Naive thymus-derived CD4-positive, alpha-beta T cell (primary cell): ENCODE measurements at regions of chr9 and their contacts with region 1.

Region 1: GRCh38 chr9:137240861-137241489 is at the start of gene TUBB4B:
- DNase-seq: peak; percentile 87 to 99 (median 98)
- ATAC-seq: peak; percentile 87
- H3K4me3 ChIP-seq: peak within 1 kb of the TSS; percentile 72
- H3K4me3 Mint-ChIP-seq: peak within 1 kb of the TSS; percentile 83 to 97 (median 92)
- H3K27ac ChIP-seq: peak within 1 kb of the TSS; percentile 83
- H3K27ac Mint-ChIP-seq: peak within 1 kb of the TSS; percentile 82 to 94 (median 93)
- H3K4me1 ChIP-seq: peaks cover 15 to 23% of the 10 kb centered on the region in 2 donors
- H3K4me1 Mint-ChIP-seq: peaks cover 12 to 35% (median 21%) of the 10 kb centered on the region in 7 donors
- H3K27me3 ChIP-seq: no peaks in the 10 kb centered on the region
- H3K27me3 Mint-ChIP-seq: peaks cover 0 to 4% (median 0%) of the 10 kb centered on the region in 5 donors
- total RNA-seq, gene TUBB4B: 44.2 to 260 (median 87.5) TPM

Region 2: DNA sequence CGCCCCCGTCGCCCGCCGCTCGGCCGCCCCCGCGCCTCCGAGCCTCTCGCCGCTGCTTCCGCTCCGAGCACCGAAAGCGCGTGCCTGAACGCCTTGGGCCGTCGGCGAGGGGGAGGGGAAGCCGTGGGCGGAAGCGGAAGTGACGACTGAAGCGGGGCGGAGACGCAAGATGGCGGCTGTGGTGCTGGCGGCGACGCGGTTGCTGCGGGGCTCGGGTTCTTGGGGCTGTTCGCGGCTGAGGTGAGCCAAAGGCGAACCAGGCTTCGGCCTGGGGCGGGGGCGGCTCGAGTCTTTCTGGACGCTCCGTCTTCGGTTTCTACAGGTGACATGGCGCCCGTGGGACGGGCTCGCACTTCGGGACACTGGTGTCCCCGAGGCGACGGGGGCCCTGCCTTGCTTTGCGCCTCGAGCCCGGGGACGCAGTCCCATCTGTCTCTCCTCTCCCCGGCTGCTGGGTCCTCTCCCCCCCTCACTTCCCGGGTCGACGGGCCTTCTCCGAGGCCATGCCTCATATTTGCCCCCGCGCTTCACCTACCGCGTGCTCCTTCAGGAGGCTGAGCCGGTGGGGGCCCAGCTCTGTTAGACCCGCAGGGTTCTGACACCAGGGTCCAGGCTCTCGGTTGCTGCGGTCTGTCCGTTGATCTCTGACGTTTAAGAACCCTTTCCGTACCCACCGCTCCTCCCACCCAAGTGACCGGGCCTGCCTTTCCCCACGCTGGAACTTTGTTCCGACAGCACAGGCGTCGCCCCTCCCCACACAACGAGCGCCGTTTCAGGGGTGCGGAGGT is 830.3 kb before region 1 on chr9 and contains the starts of genes ENTR1 and PMPCA:
- CTCF ChIA-PET with region 1: no interaction called
- POLR2A ChIA-PET with region 1: no interaction called
- intact Hi-C with region 1: loop called in 1 of 2 experiments (anchors 5 kb)
- DNase-seq: peak; percentile 90 to 99 (median 93)
- ATAC-seq: peak; percentile 94
- H3K4me3 ChIP-seq: peak within 1 kb of the TSS; percentile 96
- H3K4me3 Mint-ChIP-seq: peak within 1 kb of the TSS; percentile 83 to 93 (median 90)
- H3K27ac ChIP-seq: peak within 1 kb of the TSS; percentile 97
- H3K27ac Mint-ChIP-seq: peak within 1 kb of the TSS; percentile 78 to 95 (median 90)
- H3K4me1 ChIP-seq: peaks cover 18 to 26% of the 10 kb centered on the region in 2 donors
- H3K4me1 Mint-ChIP-seq: peaks cover 34 to 56% (median 45%) of the 10 kb centered on the region in 7 donors
- H3K27me3 ChIP-seq: no peaks in the 10 kb centered on the region
- H3K27me3 Mint-ChIP-seq: no peaks in the 10 kb centered on the region
- total RNA-seq, gene ENTR1: 56.3 to 89.0 (median 66.6) TPM
- total RNA-seq, gene PMPCA: 60.5 to 86.3 (median 71.6) TPM

Region 3: DNA sequence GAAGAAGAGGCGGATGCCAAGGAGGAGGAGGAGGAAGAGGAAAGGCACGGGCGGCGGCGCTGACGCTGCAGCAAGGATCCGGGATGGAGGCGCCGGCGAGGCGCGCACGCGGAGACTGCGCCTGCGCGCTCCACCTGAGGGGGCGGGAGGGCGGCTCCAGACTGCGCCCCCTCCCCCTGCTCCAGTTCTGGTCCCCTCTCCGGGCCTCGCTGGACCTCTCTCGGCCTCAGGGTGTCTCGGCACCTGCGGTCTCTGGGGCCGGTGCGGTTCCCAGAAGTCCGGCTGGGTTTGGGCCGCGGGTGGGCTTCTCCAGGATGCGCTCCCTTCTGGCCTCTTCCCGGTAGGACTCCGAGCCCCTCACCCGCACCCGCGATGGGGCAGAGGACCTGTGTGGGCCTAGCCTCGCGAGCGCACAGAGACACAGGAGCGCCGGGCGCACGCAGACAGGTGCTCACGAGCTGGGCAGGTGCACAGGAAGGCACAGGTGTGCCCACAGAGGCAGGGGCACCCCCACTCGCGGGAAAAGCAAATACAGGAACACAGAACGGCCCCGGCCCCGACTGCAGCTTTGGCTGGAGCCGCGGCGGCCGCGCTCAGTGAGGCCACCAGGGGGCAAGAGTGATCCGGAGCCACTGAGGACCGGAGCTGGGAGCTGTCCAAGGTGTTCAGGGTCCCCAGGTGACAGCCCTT is 194.7 kb before region 1 on chr9 and contains the start of gene NPDC1:
- CTCF ChIA-PET with region 1: interaction called, 3 read pairs
- POLR2A ChIA-PET with region 1: no interaction called
- intact Hi-C with region 1: loop called in 1 of 2 experiments (anchors 5 kb)
- DNase-seq: peak; percentile 55 to 86 (median 66)
- ATAC-seq: peak; percentile 92
- H3K4me3 ChIP-seq: peak within 1 kb of the TSS; percentile 46
- H3K4me3 Mint-ChIP-seq: peak within 1 kb of the TSS; percentile 29 to 79 (median 59)
- H3K27ac ChIP-seq: no peak within 1 kb of the TSS
- H3K27ac Mint-ChIP-seq: no peak within 1 kb of the TSS
- H3K4me1 ChIP-seq: peaks cover 9 to 25% of the 10 kb centered on the region in 2 donors
- H3K4me1 Mint-ChIP-seq: peaks cover 0 to 11% (median 9%) of the 10 kb centered on the region in 7 donors
- H3K27me3 ChIP-seq: peaks cover 9 to 35% of the 10 kb centered on the region in 2 donors
- H3K27me3 Mint-ChIP-seq: peaks cover 15 to 46% (median 34%) of the 10 kb centered on the region in 5 donors
- total RNA-seq, gene NPDC1: 2.3 to 37.5 (median 7.4) TPM

Region 4: DNA sequence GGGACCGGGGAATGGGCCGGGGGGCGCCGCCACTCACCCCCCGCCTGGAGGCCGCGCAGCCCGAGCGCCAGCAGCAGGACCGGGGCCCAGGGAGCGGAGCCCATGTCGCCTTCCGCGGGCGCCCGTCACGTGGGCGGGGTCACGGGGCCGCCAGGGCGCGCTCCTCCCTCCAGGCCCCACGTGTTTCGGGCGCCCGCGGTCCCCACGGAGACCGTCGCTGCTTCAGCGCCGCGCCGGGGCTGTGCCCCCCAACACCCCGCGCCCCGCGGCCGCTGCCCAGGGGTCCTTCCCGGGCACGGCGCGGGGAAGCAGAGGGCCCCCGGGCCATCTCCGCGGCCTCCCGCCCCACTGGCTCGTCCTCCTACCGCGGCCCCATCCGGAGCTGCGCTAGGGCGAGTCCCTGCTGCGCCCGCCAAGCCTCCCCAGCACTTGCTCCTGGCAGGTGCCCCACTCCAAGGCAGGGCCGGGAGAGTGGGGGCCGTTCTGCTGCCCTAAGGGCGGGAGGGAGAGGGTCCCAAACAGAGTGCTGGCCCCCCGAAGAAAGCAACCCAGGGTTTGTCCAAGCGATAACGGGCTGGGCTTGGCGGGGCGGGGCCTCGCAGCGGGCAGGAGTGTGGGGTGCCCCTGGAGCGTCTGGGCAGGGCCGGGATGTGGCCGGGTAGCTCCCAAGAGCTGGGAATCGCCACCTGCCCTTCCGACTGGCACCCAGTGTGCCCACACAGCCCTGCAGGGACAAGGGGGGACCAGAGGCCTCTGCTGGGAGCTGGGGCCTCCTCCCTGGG is 126.2 kb before region 1 on chr9 and contains the start of gene DPP7:
- CTCF ChIA-PET with region 1: interaction called, 4 read pairs
- POLR2A ChIA-PET with region 1: interaction called, 7 read pairs
- intact Hi-C with region 1: loop called in 1 of 2 experiments (anchors 1 kb)
- DNase-seq: peak; percentile 63 to 88 (median 80)
- ATAC-seq: peak; percentile 93
- H3K4me3 ChIP-seq: peak within 1 kb of the TSS; percentile 54
- H3K4me3 Mint-ChIP-seq: peak within 1 kb of the TSS; percentile 38 to 82 (median 69)
- H3K27ac ChIP-seq: peak within 1 kb of the TSS; percentile 81
- H3K27ac Mint-ChIP-seq: peak within 1 kb of the TSS in 4 of 9 donors; percentile 24 to 78 (median 40)
- H3K4me1 ChIP-seq: peaks cover 0 to 4% of the 10 kb centered on the region in 2 donors
- H3K4me1 Mint-ChIP-seq: peaks cover 0 to 13% (median 6%) of the 10 kb centered on the region in 7 donors
- H3K27me3 ChIP-seq: no peaks in the 10 kb centered on the region
- H3K27me3 Mint-ChIP-seq: no peaks in the 10 kb centered on the region
- total RNA-seq, gene DPP7: 235 to 328 (median 298) TPM

Region 5: DNA sequence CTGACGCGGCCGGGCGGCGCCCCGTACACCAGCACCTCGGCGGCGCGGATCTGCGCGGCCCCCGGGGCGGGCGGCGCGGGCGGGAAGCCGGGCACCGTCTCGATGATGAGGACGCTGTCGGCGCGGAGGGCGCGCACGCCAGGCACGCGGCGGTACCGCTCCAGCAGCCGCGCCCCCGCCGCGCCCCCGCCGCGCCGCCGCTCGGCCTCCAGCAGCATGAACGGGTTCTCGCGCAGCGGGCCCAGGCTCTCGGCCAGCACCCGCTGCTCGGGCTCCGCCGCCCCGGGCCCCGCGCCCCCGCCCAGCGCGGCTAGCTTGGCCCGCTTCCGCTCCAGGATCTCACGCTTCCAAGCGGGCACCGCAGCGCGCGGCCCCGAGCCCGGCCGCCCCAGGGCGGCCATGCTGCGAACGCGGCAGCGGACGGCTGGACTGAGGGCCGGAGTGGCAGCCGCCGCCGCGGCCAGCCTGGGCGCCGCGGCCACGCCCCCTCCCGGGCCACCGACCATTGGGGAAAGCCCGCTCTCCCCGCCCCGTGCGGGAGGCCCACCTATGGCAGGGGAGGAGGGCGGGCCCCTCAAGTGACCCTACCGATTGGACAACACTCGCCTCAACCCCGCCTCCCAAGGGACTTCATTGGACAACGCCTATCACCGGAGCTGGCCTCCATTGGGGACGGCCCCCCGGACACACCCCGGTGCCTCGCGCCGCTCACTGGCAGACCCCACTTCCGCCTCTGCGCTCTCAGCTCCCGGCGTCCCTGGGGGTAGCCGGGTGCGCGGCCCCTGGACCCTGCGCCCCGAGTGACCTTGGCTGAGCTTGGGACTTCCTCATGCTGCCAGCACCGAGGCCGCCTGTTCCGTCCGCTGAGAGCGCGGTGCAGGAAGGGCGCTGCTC is 40.4 kb before region 1 on chr9 and contains the start of gene TPRN:
- CTCF ChIA-PET with region 1: interaction called, 3 read pairs
- POLR2A ChIA-PET with region 1: interaction called, 22 read pairs
- intact Hi-C with region 1: loop called (anchors 1 kb)
- DNase-seq: peak; percentile 89 to 98 (median 97)
- ATAC-seq: peak; percentile 98
- H3K4me3 ChIP-seq: peak within 1 kb of the TSS; percentile 75
- H3K4me3 Mint-ChIP-seq: peak within 1 kb of the TSS; percentile 77 to 89 (median 84)
- H3K27ac ChIP-seq: peak within 1 kb of the TSS; percentile 78
- H3K27ac Mint-ChIP-seq: peak within 1 kb of the TSS; percentile 12 to 91 (median 78)
- H3K4me1 ChIP-seq: peaks cover 20 to 23% of the 10 kb centered on the region in 2 donors
- H3K4me1 Mint-ChIP-seq: peaks cover 16 to 34% (median 23%) of the 10 kb centered on the region in 7 donors
- H3K27me3 ChIP-seq: no peaks in the 10 kb centered on the region
- H3K27me3 Mint-ChIP-seq: no peaks in the 10 kb centered on the region
- total RNA-seq, gene TPRN: 7.1 to 13.5 (median 8.5) TPM

Region 6: GRCh38 chr9:137262909-137263285 is 21.9 kb after region 1 on chr9:
- CTCF ChIA-PET with region 1: interaction called, 3 read pairs
- POLR2A ChIA-PET with region 1: interaction called, 168 read pairs
- intact Hi-C with region 1: loop called in 1 of 2 experiments (anchors 1 kb)
- DNase-seq: peak in 1 of 9 donors; percentile 3
- ATAC-seq: no peak
- H3K4me3 ChIP-seq: no peak overlapping the region
- H3K4me3 Mint-ChIP-seq: no peak overlapping the region
- H3K27ac ChIP-seq: no peak overlapping the region
- H3K27ac Mint-ChIP-seq: no peak overlapping the region
- H3K4me1 ChIP-seq: no peaks in the 10 kb centered on the region
- H3K4me1 Mint-ChIP-seq: peaks cover 0 to 5% (median 0%) of the 10 kb centered on the region in 7 donors
- H3K27me3 ChIP-seq: no peaks in the 10 kb centered on the region
- H3K27me3 Mint-ChIP-seq: no peaks in the 10 kb centered on the region

Region 7: DNA sequence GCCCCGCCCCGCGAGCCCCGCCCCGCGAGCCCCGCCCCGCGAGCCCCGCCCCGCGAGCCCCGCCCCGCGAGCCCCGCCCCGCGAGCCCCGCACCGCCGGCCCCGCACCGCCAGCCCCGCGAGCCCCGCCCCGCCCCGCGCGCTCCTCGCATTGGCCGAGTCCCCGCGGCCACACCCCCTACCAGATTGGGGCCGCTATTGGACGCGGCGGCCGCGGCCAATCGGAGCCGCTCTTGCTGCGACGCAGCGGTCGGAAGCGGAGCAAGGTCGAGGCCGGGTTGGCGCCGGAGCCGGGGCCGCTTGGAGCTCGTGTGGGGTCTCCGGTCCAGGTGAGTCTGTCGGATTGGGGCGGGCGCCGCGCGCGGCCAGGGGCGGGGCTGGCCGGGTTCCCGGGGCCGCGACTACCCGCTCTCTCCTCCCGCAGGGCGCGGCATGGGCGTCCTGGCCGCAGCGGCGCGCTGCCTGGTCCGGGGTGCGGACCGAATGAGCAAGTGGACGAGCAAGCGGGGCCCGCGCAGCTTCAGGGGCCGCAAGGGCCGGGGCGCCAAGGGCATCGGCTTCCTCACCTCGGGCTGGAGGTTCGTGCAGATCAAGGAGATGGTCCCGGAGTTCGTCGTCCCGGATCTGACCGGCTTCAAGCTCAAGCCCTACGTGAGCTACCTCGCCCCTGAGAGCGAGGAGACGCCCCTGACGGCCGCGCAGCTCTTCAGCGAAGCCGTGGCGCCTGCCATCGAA is 310.8 kb after region 1 on chr9 and contains the start of gene MRPL41:
- CTCF ChIA-PET with region 1: interaction called, 3 read pairs
- POLR2A ChIA-PET with region 1: interaction called, 3 read pairs
- intact Hi-C with region 1: loop called in 1 of 2 experiments (anchors 1 kb)
- DNase-seq: peak; percentile 77 to 96 (median 85)
- ATAC-seq: peak; percentile 94
- H3K4me3 ChIP-seq: peak within 1 kb of the TSS; percentile 77
- H3K4me3 Mint-ChIP-seq: peak within 1 kb of the TSS; percentile 82 to 96 (median 90)
- H3K27ac ChIP-seq: peak within 1 kb of the TSS; percentile 85
- H3K27ac Mint-ChIP-seq: peak within 1 kb of the TSS; percentile 77 to 91 (median 83)
- H3K4me1 ChIP-seq: peaks cover 0 to 6% of the 10 kb centered on the region in 2 donors
- H3K4me1 Mint-ChIP-seq: peaks cover 11 to 24% (median 17%) of the 10 kb centered on the region in 7 donors
- H3K27me3 ChIP-seq: no peaks in the 10 kb centered on the region
- H3K27me3 Mint-ChIP-seq: no peaks in the 10 kb centered on the region
- total RNA-seq, gene MRPL41: 41.1 to 102 (median 53.9) TPM